Ascending aorta (tissue), 2 donors: ENCODE measurements at regions of chr19 and their contacts with region 1.

Region 1: GRCh38 chr19:45902651-45903625 is 525 bp upstream of the MYPOP start:
- DNase-seq: peak; percentile 88 to 99
- H3K4me3 ChIP-seq: peak overlapping the region; percentile 72 to 86
- H3K27ac ChIP-seq: peak overlapping the region; percentile 39 to 57
- H3K4me1 ChIP-seq: peaks cover 7 to 9% of the 10 kb centered on the region in 2 donors
- H3K27me3 ChIP-seq: no peaks in the 10 kb centered on the region
- CTCF ChIP-seq: no peak

Region 2: GRCh38 chr19:45848922-45849321 is 54.0 kb before region 1 on chr19:
- intact Hi-C with region 1: no loop called
- DNase-seq: no peak
- H3K4me3 ChIP-seq: no peak overlapping the region
- H3K27ac ChIP-seq: no peak overlapping the region
- H3K4me1 ChIP-seq: no peaks in the 10 kb centered on the region
- H3K27me3 ChIP-seq: no peaks in the 10 kb centered on the region
- CTCF ChIP-seq: no peak

Region 3: DNA sequence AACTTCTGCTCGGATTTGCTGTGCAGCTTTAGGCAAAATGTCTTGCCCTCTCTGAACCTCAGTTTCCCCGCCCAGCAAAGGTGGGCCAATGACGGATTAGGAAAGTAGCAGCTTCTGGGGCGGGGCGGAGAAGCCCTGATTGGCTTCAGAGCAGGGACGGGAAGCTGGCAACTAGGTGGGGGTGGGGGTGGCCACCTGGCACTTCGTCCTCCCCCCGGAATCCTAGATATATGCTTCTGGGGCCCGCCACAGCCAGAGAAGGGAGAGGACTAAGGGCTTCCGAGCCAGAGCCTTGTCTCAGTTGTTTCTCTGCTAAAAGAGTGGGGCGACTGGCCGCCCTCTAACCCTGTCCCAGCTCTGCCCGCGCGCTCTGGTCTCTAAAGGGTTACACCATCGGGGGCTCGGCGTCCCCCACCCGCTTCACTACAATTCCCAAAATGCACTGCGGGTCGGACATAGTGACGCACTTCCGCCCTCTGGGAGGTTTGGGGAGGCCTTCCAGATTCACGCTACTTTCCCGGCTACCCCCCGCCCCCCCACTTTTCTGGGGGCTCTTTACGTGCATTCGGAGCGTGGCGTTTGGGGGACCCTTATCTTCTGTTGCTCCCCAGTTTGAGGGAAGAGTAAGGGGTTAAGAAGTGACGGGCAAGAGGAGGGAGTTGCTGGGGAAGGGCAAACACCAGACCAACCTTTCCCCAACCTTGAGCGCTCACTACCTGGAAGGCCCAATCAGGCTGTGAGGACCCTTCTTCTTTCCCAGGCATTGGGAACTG is 16.3 kb before region 1 on chr19:
- intact Hi-C with region 1: loop called (anchors 1 kb)
- DNase-seq: peak; percentile 64 to 96
- H3K4me3 ChIP-seq: peak overlapping the region; percentile 71 to 95
- H3K27ac ChIP-seq: peak overlapping the region; percentile 87 to 88
- H3K4me1 ChIP-seq: peaks cover 22 to 37% of the 10 kb centered on the region in 2 donors
- H3K27me3 ChIP-seq: no peaks in the 10 kb centered on the region
- CTCF ChIP-seq: no peak

Region 4: GRCh38 chr19:45927565-45928261 is 24.8 kb after region 1 on chr19:
- intact Hi-C with region 1: loop called (anchors 1 kb)
- DNase-seq: peak; percentile 34 to 91
- H3K4me3 ChIP-seq: no peak overlapping the region
- H3K27ac ChIP-seq: no peak overlapping the region
- H3K4me1 ChIP-seq: peaks cover 0 to 3% of the 10 kb centered on the region in 2 donors
- H3K27me3 ChIP-seq: no peaks in the 10 kb centered on the region
- CTCF ChIP-seq: peak in 1 of 3 experiments; percentile 8